Activated CD8-positive, alpha-beta T cell treated with anti-CD3 and anti-CD28 coated beads for 36 hours (primary cell): ENCODE measurements at regions of chr9 and their contacts with region 1.

Region 1: GRCh38 chr9:104032556-104032955 is 61.6 kb upstream of the SMC2 start:
- DNase-seq: no peak
- ATAC-seq: no peak
- H3K4me3 Mint-ChIP-seq: no peak overlapping the region
- H3K27ac Mint-ChIP-seq: no peak overlapping the region
- H3K4me1 Mint-ChIP-seq: peaks cover 12% of the 10 kb centered on the region
- H3K27me3 Mint-ChIP-seq: no peaks in the 10 kb centered on the region
- CTCF ChIP-seq: no peak

Region 2: DNA sequence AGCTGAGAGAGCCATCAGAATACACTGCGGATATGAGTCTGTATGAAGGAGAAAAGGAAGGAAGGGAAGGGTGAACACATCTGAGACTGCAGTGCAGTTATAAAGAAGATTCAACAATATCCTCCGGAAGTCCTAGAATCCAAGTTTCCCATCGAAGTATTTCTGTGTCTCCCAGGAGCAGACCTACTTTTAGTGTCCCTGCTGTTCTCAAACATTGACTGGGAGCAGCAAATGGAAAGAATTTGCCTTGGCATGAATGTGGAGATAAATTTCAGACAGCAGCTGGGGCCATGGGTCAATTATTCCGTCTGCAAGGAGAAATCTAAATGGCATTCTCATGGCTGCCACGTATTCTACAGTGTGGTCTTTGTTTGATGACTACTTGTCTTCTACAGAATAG is 416.6 kb before region 1 on chr9:
- CTCF ChIA-PET with region 1: no interaction called
- POLR2A ChIA-PET with region 1: no interaction called
- intact Hi-C with region 1: no loop called
- DNase-seq: no peak
- ATAC-seq: no peak
- H3K4me3 Mint-ChIP-seq: no peak overlapping the region
- H3K27ac Mint-ChIP-seq: no peak overlapping the region
- H3K4me1 Mint-ChIP-seq: no peaks in the 10 kb centered on the region
- H3K27me3 Mint-ChIP-seq: no peaks in the 10 kb centered on the region
- CTCF ChIP-seq: no peak

Region 3: DNA sequence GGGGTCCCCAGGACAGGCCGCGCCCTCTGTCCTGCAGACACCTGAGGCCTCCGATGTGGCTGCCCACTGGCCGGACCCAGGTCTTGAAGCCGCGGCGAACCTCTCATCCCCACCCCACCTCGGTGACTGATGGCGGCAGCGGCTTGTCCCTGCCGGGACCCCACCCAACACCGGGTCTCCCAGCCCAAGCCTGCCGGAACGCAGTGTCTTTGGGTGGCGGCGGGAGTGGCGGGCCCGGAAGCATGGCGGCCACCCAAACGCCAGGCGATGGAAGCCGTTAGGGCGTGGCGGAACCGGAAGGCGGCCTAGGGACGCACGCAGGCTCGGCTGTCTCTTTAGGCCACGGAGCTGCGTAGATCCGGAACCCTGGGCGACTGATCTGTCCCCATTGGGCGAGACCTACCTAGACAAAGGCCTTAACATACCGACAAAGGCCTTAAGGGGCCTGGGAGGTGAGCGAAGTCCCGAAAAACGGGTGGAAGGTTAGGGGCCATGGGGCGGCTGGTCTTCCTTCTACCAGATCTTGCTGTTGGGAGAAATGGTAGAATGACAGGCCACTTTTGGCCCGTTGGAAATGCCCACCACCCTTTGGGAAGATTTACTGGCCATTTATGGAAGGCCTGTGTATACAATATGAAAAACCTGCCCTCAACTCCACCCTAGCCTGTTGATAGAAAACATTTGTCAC is 33.0 kb before region 1 on chr9:
- CTCF ChIA-PET with region 1: no interaction called
- POLR2A ChIA-PET with region 1: no interaction called
- intact Hi-C with region 1: no loop called
- DNase-seq: no peak
- ATAC-seq: no peak
- H3K4me3 Mint-ChIP-seq: no peak overlapping the region
- H3K27ac Mint-ChIP-seq: no peak overlapping the region
- H3K4me1 Mint-ChIP-seq: no peaks in the 10 kb centered on the region
- H3K27me3 Mint-ChIP-seq: peaks cover 8% of the 10 kb centered on the region
- CTCF ChIP-seq: no peak

Region 4: GRCh38 chr9:104022083-104022482 is 10.5 kb before region 1 on chr9:
- CTCF ChIA-PET with region 1: no interaction called
- POLR2A ChIA-PET with region 1: no interaction called
- intact Hi-C with region 1: no loop called
- DNase-seq: no peak
- ATAC-seq: no peak
- H3K4me3 Mint-ChIP-seq: no peak overlapping the region
- H3K27ac Mint-ChIP-seq: no peak overlapping the region
- H3K4me1 Mint-ChIP-seq: peaks cover 1% of the 10 kb centered on the region
- H3K27me3 Mint-ChIP-seq: peaks cover 1% of the 10 kb centered on the region
- CTCF ChIP-seq: no peak

Region 5: DNA sequence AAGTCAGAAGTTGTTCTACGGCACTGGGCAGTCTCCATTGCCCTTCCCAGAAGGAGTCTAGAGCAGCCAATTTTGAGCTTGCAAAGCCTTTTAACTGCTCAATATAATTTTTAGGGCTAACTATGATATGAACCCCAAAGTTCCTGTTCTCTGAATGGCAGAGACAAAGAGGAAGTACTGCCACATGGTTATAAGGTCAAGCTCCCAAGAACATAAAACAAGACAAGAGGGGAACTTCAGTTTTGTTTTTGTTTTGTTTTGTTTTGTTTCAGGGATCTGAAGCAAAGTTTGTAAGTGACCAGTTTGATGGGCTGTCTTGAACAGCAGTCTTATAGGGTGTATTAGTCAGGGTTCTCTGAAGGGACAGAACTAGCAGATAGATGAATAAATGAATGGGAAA is 49.6 kb after region 1 on chr9:
- CTCF ChIA-PET with region 1: no interaction called
- POLR2A ChIA-PET with region 1: no interaction called
- intact Hi-C with region 1: loop called (anchors 5 kb)
- DNase-seq: no peak
- ATAC-seq: no peak
- H3K4me3 Mint-ChIP-seq: no peak overlapping the region
- H3K27ac Mint-ChIP-seq: no peak overlapping the region
- H3K4me1 Mint-ChIP-seq: no peaks in the 10 kb centered on the region
- H3K27me3 Mint-ChIP-seq: peaks cover 9% of the 10 kb centered on the region
- CTCF ChIP-seq: no peak